Spleen (tissue), 13 donors: ENCODE measurements at regions of chr2 and their contacts with region 1.

Region 1: GRCh38 chr2:237474931-237475703 is 11.9 kb upstream of the MLPH start:
- DNase-seq: peak; percentile 94
- H3K4me3 ChIP-seq: peak overlapping the region; percentile 51 to 82 (median 60)
- H3K27ac ChIP-seq: peak overlapping the region; percentile 80 to 91 (median 86)
- H3K4me1 ChIP-seq: peaks cover 0 to 29% (median 15%) of the 10 kb centered on the region in 6 donors
- H3K27me3 ChIP-seq: peaks cover 0 to 44% (median 7%) of the 10 kb centered on the region in 7 donors
- CTCF ChIP-seq: peak; percentile 57 to 91 (median 89)
- POLR2A ChIP-seq: no peak

Region 2: DNA sequence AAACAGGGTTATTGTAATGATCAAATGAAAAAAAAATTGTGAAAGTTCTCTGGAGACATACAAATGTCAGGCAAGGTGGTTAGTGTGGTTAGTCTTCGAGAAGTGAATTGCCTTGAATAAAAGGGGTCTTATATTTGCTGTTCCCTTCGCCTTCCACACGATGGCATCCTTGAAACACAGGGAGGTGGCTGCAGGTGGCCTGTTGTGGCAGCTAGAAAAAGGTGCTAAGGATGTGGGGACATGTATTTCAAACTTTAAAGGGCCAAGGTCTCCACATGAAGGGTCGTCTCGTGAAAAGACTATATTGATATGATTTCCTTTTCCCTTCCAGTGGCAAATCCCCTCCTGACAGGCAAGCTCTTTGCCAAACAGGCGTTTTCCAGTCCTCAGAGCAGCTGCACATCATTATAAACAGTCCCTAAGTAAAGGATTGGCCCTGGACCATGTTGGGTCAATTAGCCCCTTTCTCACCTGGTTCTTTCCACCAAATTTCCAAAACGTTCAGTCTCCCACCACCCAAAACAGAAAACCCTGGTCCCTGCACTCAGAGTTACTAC is 321.0 kb before region 1 on chr2:
- intact Hi-C with region 1: loop called (anchors 10 kb)
- DNase-seq: no peak
- H3K4me3 ChIP-seq: no peak overlapping the region
- H3K27ac ChIP-seq: no peak overlapping the region
- H3K4me1 ChIP-seq: no peaks in the 10 kb centered on the region
- H3K27me3 ChIP-seq: peaks cover 0 to 23% (median 0%) of the 10 kb centered on the region in 7 donors
- CTCF ChIP-seq: peak in 8 of 11 experiments; percentile 10 to 56 (median 49)
- POLR2A ChIP-seq: no peak

Region 3: DNA sequence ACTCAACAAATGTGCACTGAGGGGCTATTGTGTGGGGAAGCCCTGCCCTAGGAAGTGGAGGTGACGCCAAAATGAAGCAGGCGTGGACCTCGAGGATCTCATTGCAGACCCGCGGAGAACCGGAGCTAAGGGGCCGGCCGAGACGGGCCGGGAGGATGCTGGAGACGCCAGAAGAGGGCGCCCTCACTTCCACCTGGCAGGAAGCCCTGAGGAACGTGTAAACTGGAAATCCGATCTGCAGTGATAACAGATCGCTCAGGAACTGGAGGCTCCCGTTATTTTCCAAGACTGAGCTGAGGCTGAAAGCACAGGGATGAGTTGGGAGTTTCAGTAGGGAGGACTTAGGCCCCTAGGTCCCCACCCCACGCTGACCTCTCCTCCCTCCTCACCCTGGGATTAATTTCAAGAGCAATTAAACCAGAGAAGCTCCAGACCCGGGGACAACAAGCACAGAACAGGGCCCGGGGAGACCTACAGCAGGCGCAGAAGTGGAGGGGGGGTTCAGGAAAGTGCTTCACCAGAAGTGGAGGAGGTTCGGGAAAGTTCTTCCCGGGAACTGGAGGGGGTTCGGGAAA is 53.5 kb before region 1 on chr2:
- intact Hi-C with region 1: loop called (anchors 2 kb)
- DNase-seq: peak; percentile 83
- H3K4me3 ChIP-seq: peak overlapping the region in 1 of 8 donors; percentile 21
- H3K27ac ChIP-seq: peak overlapping the region in 6 of 8 donors; percentile 6 to 58 (median 37)
- H3K4me1 ChIP-seq: peaks cover 0 to 10% (median 7%) of the 10 kb centered on the region in 6 donors
- H3K27me3 ChIP-seq: peaks cover 0 to 71% (median 5%) of the 10 kb centered on the region in 7 donors
- CTCF ChIP-seq: peak; percentile 32 to 79 (median 60)
- POLR2A ChIP-seq: no peak